H1 (cell line): ENCODE measurements at regions of chr10 and their contacts with region 1.

Region 1: DNA sequence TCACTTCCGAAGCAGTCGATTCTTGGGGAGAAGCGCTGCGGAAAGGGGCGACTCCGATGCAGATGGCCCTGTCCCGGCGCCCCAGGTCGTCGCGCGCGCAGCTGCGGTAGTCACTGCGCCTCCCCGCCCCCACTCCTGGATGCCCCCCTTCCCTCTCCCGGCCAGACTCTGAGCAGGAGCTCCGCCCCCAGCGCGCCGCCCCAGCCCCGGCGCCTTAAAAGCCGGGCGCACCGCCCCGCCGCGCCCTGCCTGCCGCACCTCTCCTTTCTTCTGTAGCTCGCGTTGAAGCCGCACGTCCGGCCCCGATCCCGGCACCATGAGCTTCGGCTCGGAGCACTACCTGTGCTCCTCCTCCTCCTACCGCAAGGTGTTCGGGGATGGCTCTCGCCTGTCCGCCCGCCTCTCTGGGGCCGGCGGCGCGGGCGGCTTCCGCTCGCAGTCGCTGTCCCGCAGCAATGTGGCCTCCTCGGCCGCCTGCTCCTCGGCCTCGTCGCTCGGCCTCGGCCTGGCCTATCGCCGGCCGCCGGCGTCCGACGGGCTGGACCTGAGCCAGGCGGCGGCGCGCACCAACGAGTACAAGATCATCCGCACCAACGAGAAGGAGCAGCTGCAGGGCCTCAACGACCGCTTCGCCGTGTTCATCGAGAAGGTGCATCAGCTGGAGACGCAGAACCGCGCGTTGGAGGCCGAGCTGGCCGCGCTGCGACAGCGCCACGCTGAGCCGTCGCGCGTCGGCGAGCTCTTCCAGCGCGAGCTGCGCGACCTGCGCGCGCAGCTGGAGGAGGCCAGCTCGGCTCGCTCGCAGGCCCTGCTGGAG is at the start of gene INA:
- DNase-seq: peak in 1 of 2 experiments; percentile 88
- H3K4me3 ChIP-seq: peak within 1 kb of the TSS; percentile 49 to 72 (median 64)
- H3K27ac ChIP-seq: no peak within 1 kb of the TSS
- H3K4me1 ChIP-seq: peaks cover 7 to 16% (median 12%) of the 10 kb centered on the region in 4 experiments
- H3K27me3 ChIP-seq: peaks cover 17 to 40% (median 37%) of the 10 kb centered on the region in 4 experiments
- CTCF ChIP-seq: no peak
- EP300 ChIP-seq: no peak
- POLR2A ChIP-seq: no peak; a peak in 1 of 3 replicates
- RAD21 ChIP-seq: no peak; a peak in 1 of 4 replicates
- total RNA-seq, gene INA: 17.4 and 18.1 TPM in 2 replicates

Region 2: DNA sequence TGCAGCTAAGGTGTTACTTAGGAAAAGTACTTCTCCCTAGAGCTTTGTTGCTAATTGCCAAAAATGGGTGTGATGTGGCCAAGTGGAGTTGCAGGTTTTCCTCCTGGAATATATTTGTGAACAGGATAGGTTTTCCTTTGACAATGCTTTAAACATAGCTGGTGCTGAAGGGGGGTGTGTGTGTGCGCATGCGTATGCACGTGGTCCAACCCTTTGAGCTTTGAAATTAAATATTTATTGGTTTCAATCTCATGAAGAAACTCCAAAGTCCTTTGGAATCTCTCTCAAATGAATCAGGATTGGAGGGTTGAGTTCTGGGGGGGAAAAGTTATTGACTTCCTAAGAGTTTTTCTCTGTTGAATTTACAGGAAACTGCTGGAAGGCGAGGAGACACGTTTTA is 10.9 kb after region 1 on chr10:
- CTCF ChIA-PET with region 1: interaction called, 4 read pairs
- POLR2A ChIA-PET with region 1: interaction called, 10 read pairs
- DNase-seq: no peak
- H3K4me3 ChIP-seq: no peak overlapping the region
- H3K27ac ChIP-seq: no peak overlapping the region
- H3K4me1 ChIP-seq: no peaks in the 10 kb centered on the region
- H3K27me3 ChIP-seq: no peaks in the 10 kb centered on the region
- CTCF ChIP-seq: no peak
- EP300 ChIP-seq: no peak
- POLR2A ChIP-seq: no peak
- RAD21 ChIP-seq: no peak